ENCODE measurements at regions of chr1 and their contacts with region 1.

Region 1: DNA sequence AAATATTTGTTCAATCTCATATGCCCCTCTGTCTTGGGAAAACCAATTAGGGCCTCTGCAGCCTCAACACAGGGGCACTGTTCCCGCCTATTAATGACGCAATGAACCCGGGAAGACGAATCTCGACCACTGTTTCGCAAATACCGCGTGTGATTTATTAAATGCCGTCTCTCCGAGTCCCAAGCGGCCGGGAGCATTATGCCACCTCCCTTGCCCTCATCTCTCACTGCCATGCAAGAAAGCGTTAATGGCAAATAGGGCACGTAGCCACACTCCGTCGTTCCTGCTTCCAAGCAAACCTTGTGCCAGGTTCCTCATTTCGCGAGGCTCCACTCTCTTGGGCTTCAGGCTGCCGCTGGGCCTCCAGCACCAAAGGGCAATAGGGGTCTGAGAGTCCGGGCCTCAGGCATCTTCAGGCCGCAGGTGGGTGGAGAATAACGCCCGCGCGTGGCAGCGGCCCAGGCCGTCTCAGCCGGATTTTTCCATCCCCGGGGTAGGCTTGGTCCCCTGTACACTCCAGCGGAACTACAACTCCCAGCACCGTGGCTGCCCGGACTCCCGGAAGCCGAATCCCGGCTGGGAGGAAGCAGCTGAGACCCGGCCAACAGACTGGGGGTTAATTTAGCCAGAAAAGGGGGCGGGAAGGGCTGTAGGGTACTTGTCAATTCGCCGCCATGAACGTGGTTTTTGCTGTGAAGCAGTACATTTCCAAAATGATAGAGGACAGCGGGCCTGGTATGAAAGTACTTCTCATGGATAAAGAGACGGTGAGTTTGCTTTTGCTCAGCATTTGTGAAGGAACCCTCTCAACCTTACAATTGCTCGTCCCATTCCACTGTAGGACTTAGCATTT is at the start of gene VPS45:
- DNase-seq: peak; percentile 93
- ATAC-seq: peak; percentile 98
- total RNA-seq, gene VPS45: 49.0 TPM

Region 2: GRCh38 chr1:150010393-150011115 is 56.9 kb before region 1 on chr1 and contains the start of gene OTUD7B:
- intact Hi-C with region 1: loop called (anchors 2 kb)
- DNase-seq: peak; percentile 89
- ATAC-seq: peak; percentile 98
- total RNA-seq, gene OTUD7B: 24.5 TPM

Region 3: DNA sequence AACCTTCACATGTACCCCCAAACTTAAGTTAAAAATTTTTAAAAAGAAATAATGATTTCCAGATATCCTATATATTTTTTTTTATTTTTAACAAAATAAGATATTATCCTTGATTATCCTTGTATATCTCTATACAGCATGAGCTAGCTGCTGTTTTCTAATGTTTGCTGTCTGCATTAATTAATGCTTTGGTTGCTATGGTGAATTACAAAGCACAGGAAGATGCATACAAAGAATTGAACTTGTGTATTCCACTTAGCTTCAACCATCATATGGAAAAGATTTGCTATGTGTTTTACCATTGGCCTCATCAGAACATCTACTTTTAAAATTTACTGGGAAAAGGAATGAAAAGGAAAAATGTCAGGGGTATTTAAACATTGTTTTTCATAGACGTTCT is 35.6 kb after region 1 on chr1:
- intact Hi-C with region 1: no loop called
- DNase-seq: no peak
- ATAC-seq: no peak

Region 4: DNA sequence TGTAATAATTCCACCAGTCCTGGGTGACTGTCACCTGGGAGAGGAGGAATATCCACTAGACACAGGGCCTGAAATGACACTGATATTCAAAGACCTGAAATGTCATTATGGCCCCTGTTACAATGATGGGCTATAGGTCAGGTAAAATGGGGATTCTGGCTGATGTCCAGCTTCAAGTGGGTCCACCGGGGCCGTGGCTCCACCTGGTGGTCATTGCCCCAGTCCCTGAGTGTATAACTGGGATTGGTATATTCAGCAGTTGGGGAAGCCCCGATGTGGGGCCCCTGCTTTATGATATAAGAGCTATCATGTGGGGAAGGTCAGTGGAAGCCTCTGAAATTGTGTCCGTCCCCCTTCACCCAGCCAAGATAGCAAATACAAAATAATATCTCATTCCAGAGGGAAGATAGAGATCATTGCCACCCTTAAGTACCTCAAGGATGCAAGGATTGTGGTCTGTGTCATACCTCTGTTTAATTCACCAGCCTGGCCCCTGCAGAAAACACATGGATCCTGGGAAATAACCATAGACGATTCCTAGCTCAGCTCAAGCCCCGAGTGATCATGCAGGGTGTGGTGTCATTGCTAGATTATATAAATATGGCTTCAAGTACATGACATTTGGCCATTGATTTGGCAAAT is 101.7 kb after region 1 on chr1:
- intact Hi-C with region 1: loop called (anchors 2 kb)
- DNase-seq: peak; percentile 85
- ATAC-seq: peak; percentile 61